Activated B cell treated with CpG ODN at 0.5 μM for 24 hours (primary cell): ENCODE measurements at regions of chr17 and their contacts with region 1.

Region 1: DNA sequence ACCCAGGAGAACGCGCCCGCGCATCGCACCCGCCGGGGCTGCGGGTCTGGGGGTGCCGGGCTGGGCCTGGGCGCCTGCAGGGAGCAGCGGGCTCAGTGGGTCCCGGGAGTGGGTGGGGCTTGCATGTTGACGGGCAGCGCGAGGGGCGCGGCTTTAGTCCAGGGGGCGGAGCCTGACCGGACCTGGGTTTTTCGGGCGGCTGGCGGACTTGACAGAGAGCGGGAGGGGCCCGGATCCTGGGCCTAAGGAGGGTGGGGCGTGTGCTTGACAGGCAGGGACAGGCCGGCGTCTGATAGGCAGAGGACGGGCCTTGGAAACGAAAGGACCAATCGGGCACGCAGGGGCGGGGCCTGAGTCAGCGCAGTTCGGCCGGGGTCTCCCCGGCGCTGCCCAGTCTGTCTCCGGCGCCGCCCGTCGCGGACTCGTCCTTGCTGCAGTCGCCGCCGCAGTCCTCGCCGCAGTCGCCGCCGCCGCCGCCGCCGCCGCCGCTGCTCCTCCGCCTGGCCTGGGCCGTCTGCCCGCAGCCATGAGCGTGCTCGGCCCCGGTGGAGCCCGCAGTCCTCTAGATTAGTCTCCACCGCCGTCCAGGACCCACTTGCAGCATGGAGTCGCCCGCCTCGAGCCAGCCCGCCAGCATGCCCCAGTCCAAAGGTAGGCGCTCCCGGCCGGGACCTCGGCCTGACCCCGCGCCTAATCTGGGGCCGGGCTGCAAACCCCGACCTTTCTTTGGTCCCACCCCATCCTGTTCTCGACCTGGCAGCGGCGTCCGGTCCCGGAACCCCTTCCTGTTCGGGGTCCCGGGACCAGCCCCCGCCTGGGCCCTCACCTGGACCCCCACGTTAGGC is at the start of gene MAP2K3:
- DNase-seq: peak; percentile 98
- ATAC-seq: peak; percentile 69
- H3K4me3 Mint-ChIP-seq: peak within 1 kb of the TSS; percentile 95
- H3K27ac Mint-ChIP-seq: peak within 1 kb of the TSS; percentile 96
- H3K4me1 Mint-ChIP-seq: peaks cover 77% of the 10 kb centered on the region
- H3K27me3 Mint-ChIP-seq: no peaks in the 10 kb centered on the region
- CTCF ChIP-seq: no peak
- total RNA-seq, gene MAP2K3: 75.1 and 81.1 TPM in 2 replicates

Region 2: GRCh38 chr17:19977311-19978208 is 1307.0 kb before region 1 on chr17 and contains the start of gene AKAP10:
- CTCF ChIA-PET with region 1: no interaction called
- POLR2A ChIA-PET with region 1: interaction called, 3 read pairs
- intact Hi-C with region 1: loop called (anchors 10 kb)
- DNase-seq: peak; percentile 96
- ATAC-seq: peak; percentile 87
- H3K4me3 Mint-ChIP-seq: peak within 1 kb of the TSS; percentile 99
- H3K27ac Mint-ChIP-seq: peak within 1 kb of the TSS; percentile 99
- H3K4me1 Mint-ChIP-seq: peaks cover 44% of the 10 kb centered on the region
- H3K27me3 Mint-ChIP-seq: no peaks in the 10 kb centered on the region
- CTCF ChIP-seq: no peak
- total RNA-seq, gene AKAP10: 38.7 and 51.5 TPM in 2 replicates

Region 3: GRCh38 chr17:21119247-21119918 is 165.2 kb before region 1 on chr17:
- CTCF ChIA-PET with region 1: interaction called, 8 read pairs
- POLR2A ChIA-PET with region 1: no interaction called
- intact Hi-C with region 1: loop called (anchors 2 kb)
- DNase-seq: peak; percentile 41
- ATAC-seq: peak; percentile 93
- H3K4me3 Mint-ChIP-seq: no peak overlapping the region
- H3K27ac Mint-ChIP-seq: no peak overlapping the region
- H3K4me1 Mint-ChIP-seq: peaks cover 6% of the 10 kb centered on the region
- H3K27me3 Mint-ChIP-seq: peaks cover 9% of the 10 kb centered on the region
- CTCF ChIP-seq: no peak

Region 4: GRCh38 chr17:21214015-21214776 is 70.3 kb before region 1 on chr17 and contains the start of gene TMEM11:
- CTCF ChIA-PET with region 1: interaction called, 3 read pairs
- POLR2A ChIA-PET with region 1: interaction called, 8 read pairs
- intact Hi-C with region 1: loop called (anchors 1 kb)
- DNase-seq: peak; percentile 97
- ATAC-seq: peak; percentile 93
- H3K4me3 Mint-ChIP-seq: peak within 1 kb of the TSS; percentile 89
- H3K27ac Mint-ChIP-seq: peak within 1 kb of the TSS; percentile 90
- H3K4me1 Mint-ChIP-seq: peaks cover 48% of the 10 kb centered on the region
- H3K27me3 Mint-ChIP-seq: no peaks in the 10 kb centered on the region
- CTCF ChIP-seq: no peak
- total RNA-seq, gene TMEM11: 21.2 and 22.2 TPM in 2 replicates

Region 5: DNA sequence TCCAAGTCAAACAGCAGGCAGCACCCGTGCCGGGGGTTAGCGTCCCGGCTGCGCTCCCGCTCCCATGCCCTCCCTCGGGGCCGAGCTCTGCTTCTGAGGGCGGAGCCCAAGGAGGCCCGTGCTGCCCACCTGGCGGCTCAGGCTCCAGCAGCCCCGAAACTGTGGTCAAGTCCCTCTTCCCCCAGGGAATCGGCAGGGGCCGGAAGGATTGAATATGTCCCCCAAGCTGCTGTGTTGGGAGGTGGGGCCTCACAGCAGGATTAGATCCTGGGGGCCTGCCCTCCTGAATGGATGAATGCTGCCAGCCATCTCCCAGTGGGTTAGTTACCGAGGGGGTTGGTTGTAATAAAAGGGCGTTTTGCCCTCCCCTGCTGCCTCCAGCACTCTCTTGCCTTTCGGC is 33.9 kb after region 1 on chr17:
- CTCF ChIA-PET with region 1: no interaction called
- POLR2A ChIA-PET with region 1: no interaction called
- intact Hi-C with region 1: loop called (anchors 1 kb)
- DNase-seq: no peak
- ATAC-seq: no peak
- H3K4me3 Mint-ChIP-seq: no peak overlapping the region
- H3K27ac Mint-ChIP-seq: no peak overlapping the region
- H3K4me1 Mint-ChIP-seq: peaks cover 7% of the 10 kb centered on the region
- H3K27me3 Mint-ChIP-seq: no peaks in the 10 kb centered on the region
- CTCF ChIP-seq: no peak

Region 6: GRCh38 chr17:21551081-21551881 is 266.7 kb after region 1 on chr17:
- CTCF ChIA-PET with region 1: no interaction called
- POLR2A ChIA-PET with region 1: no interaction called
- intact Hi-C with region 1: loop called (anchors 2 kb)
- DNase-seq: peak; percentile 75
- ATAC-seq: peak; percentile 97
- H3K4me3 Mint-ChIP-seq: peak overlapping the region; percentile 84
- H3K27ac Mint-ChIP-seq: no peak overlapping the region
- H3K4me1 Mint-ChIP-seq: peaks cover 11% of the 10 kb centered on the region
- H3K27me3 Mint-ChIP-seq: peaks cover 33% of the 10 kb centered on the region
- CTCF ChIP-seq: no peak